Naive thymus-derived CD4-positive, alpha-beta T cell (primary cell): ENCODE measurements at regions of chr2 and their contacts with region 1.

Region 1: DNA sequence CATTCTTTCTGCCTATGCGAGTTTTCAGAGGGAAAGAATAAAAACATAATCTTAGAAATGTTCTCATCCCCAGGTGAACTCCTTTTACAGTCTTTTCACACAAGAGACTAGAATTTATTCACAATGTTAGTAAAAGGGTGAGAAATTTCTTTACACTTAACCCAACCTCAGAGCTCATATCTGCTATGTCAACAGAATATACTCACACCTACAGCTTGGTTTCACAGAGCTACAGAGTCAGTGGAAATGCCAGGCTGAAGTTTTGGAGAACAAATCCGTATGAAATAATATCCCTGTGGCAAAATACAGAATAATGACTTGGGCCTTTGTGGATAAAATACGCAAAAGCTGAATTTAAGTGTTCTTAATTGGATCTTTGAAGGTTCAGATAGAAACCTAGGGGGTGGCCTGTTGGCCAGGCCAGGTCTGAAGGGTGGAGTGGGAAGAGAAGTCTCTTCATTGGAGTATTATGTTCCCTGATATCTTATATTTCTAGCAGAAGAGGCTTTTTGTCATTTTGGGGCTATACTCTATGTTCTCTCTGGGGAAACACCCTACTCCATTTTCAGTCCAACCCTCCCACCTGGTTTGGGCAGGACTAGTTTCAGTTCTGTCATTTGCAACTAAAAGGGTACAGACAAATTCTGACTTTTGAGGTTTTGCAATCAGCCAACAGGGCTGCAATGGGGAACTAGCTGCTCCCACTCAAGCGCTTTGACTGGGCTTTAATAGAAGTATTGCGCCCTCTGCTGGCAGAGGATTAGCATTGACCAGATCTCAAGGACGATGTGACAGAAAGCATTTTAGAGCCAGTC is 25.7 kb downstream of the FBXO48 start:
- DNase-seq: peak; percentile 52 to 79 (median 72)
- ATAC-seq: peak; percentile 97
- H3K4me3 ChIP-seq: no peak overlapping the region
- H3K4me3 Mint-ChIP-seq: no peak overlapping the region
- H3K27ac ChIP-seq: no peak overlapping the region
- H3K27ac Mint-ChIP-seq: peak overlapping the region in 4 of 9 donors; percentile 11 to 72 (median 40)
- H3K4me1 ChIP-seq: peaks cover 0 to 22% of the 10 kb centered on the region in 2 donors
- H3K4me1 Mint-ChIP-seq: peaks cover 0 to 16% (median 5%) of the 10 kb centered on the region in 7 donors
- H3K27me3 ChIP-seq: no peaks in the 10 kb centered on the region
- H3K27me3 Mint-ChIP-seq: peaks cover 0 to 19% (median 0%) of the 10 kb centered on the region in 5 donors

Region 2: DNA sequence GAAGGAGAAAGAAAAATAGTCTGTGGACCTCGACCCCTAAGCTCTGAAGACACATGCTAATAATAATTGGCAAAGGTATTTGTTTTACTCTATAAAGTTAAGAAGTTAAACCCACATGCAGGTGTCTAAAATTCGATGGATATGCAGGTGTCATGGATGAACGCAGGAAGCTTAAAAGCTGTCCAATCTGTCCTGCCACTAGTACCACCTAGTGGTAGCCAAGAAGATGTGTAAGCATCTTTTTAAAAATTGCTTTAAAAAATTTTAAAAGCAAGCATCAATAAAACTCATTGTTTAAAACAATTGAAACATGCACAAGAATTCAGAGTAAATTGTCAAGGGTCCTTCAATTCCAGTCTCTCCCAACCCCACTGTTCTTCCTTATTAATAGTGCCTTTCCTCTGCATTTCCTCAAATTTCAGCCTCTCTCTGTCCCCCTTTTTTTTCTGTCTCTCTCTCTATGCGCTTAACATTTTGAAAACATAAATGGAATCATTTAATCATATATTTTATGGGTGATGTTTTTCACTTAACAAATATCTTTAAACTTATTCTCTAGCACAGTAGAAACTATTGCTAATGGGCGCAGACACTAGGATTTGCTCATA is 158.5 kb before region 1 on chr2:
- CTCF ChIA-PET with region 1: no interaction called
- POLR2A ChIA-PET with region 1: no interaction called
- intact Hi-C with region 1: loop called (anchors 1 to 5 kb)
- DNase-seq: peak in 7 of 9 donors; percentile 28 to 54 (median 43)
- ATAC-seq: peak; percentile 81
- H3K4me3 ChIP-seq: no peak overlapping the region
- H3K4me3 Mint-ChIP-seq: no peak overlapping the region
- H3K27ac ChIP-seq: no peak overlapping the region
- H3K27ac Mint-ChIP-seq: no peak overlapping the region
- H3K4me1 ChIP-seq: no peaks in the 10 kb centered on the region
- H3K4me1 Mint-ChIP-seq: peaks cover 0 to 4% (median 0%) of the 10 kb centered on the region in 7 donors
- H3K27me3 ChIP-seq: no peaks in the 10 kb centered on the region
- H3K27me3 Mint-ChIP-seq: peaks cover 5 to 46% (median 16%) of the 10 kb centered on the region in 5 donors

Region 3: GRCh38 chr2:68362069-68362468 is 79.3 kb before region 1 on chr2:
- CTCF ChIA-PET with region 1: interaction called, 8 read pairs
- POLR2A ChIA-PET with region 1: no interaction called
- intact Hi-C with region 1: loop called (anchors 1 kb)
- DNase-seq: peak; percentile 62 to 81 (median 76)
- ATAC-seq: peak; percentile 87
- H3K4me3 ChIP-seq: peak overlapping the region; percentile 37
- H3K4me3 Mint-ChIP-seq: peak overlapping the region in 9 of 10 donors; percentile 21 to 87 (median 74)
- H3K27ac ChIP-seq: no peak overlapping the region
- H3K27ac Mint-ChIP-seq: peak overlapping the region in 6 of 9 donors; percentile 10 to 81 (median 18)
- H3K4me1 ChIP-seq: peaks cover 0 to 20% of the 10 kb centered on the region in 2 donors
- H3K4me1 Mint-ChIP-seq: peaks cover 6 to 19% (median 10%) of the 10 kb centered on the region in 7 donors
- H3K27me3 ChIP-seq: no peaks in the 10 kb centered on the region
- H3K27me3 Mint-ChIP-seq: peaks cover 0 to 23% (median 0%) of the 10 kb centered on the region in 5 donors